ENCODE measurements at regions of chr5 and their contacts with region 1.

Region 1: DNA sequence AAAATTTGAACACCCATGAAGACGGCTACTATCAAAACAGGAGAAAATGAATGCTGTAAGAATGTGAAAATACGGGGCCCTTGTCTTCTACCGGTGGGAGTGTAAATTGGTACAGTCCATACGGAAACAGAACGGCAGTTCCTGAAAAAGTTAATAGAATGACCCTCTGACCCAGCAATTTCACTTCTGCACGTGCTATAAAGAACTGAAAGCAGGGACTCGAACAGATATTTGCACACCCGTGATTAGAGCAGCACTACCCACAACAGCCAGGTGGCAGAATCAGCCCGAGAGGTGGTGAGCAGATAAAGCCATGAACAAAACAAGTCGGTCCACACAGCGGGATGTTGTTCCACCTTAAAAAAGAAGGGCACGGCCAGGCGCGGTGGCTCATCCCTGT is 22.6 kb upstream of the SLC12A7 start:
- DNase-seq: no peak
- H3K4me3 ChIP-seq: no peak overlapping the region
- H3K27ac ChIP-seq: peak overlapping the region; percentile 58
- H3K4me1 ChIP-seq: peaks cover 61% of the 10 kb centered on the region
- H3K27me3 ChIP-seq: no peaks in the 10 kb centered on the region
- CTCF ChIP-seq: peak; percentile 33

Region 2: GRCh38 chr5:801472-801871 is 333.0 kb before region 1 on chr5:
- intact Hi-C with region 1: no loop called
- DNase-seq: no peak
- H3K4me3 ChIP-seq: no peak overlapping the region
- H3K27ac ChIP-seq: no peak overlapping the region
- H3K4me1 ChIP-seq: no peaks in the 10 kb centered on the region
- H3K27me3 ChIP-seq: no peaks in the 10 kb centered on the region
- CTCF ChIP-seq: no peak

Region 3: GRCh38 chr5:989961-990530 is 144.4 kb before region 1 on chr5:
- intact Hi-C with region 1: loop called (anchors 10 kb)
- DNase-seq: peak; percentile 78
- H3K4me3 ChIP-seq: no peak overlapping the region
- H3K27ac ChIP-seq: peak overlapping the region; percentile 86
- H3K4me1 ChIP-seq: peaks cover 47% of the 10 kb centered on the region
- H3K27me3 ChIP-seq: no peaks in the 10 kb centered on the region
- CTCF ChIP-seq: peak; percentile 84

Measured in left ventricle myocardium inferior (tissue), 1 donor.